ENCODE measurements at regions of chr5 and their contacts with region 1.

Region 1: DNA sequence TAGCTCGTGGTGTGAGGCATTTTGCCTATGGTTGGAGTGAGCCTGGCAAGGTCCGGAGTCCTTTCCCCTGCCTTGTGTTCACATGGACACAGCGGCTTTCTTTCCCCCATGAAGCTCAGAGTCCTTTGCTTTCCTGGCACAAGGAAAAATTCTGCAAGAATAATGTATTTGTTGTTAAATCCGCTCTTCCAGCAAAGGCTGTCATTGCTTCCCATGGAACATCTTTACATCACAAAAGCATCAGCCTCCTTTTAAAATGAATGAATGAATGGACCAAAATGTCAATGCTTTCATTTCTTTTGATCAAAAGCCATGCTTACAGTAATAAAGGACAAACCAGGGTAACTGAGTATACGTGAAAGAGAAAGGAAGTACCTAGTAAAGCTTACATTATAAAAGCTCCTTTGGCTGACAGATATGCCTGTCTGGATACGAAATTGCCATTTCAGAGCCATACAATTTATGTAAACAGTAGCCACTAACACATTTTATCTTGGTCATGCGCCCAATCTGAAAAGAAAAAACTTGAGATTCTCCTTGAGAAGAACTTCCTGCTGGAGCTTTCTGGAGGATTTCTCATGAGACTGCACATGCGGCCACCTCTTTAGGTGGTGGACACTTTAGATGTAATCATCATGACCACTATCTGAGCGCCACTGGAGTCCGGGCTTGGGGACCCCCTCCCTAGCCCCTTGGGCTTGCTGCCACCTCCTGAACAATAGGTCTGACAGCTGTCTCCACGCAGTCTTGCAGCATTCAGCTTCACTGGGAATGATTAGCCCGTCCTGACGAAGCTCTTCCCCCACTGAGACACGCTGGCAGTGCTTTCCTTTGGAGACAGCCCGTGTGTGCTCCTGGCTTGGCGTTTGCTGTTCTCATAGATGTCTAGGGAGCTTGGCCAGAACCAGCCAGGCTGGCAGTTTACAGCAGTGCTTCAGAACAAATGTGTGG is 355.9 kb downstream of the ADAMTS6 start:
- DNase-seq: no peak
- H3K4me3 ChIP-seq: no peak overlapping the region
- H3K27ac ChIP-seq: no peak overlapping the region
- H3K4me1 ChIP-seq: peaks cover 5% of the 10 kb centered on the region
- H3K27me3 ChIP-seq: no peaks in the 10 kb centered on the region
- CTCF ChIP-seq: no peak

Region 2: GRCh38 chr5:65142511-65143011 is 16.7 kb after region 1 on chr5:
- CTCF ChIA-PET with region 1: interaction called, 14 read pairs
- dilution Hi-C with region 1: no loop called
- in situ Hi-C with region 1: no loop called
- intact Hi-C with region 1: no loop called
- DNase-seq: no peak
- H3K4me3 ChIP-seq: no peak overlapping the region
- H3K27ac ChIP-seq: no peak overlapping the region
- H3K4me1 ChIP-seq: peaks cover 5% of the 10 kb centered on the region
- H3K27me3 ChIP-seq: no peaks in the 10 kb centered on the region
- CTCF ChIP-seq: no peak

Region 3: DNA sequence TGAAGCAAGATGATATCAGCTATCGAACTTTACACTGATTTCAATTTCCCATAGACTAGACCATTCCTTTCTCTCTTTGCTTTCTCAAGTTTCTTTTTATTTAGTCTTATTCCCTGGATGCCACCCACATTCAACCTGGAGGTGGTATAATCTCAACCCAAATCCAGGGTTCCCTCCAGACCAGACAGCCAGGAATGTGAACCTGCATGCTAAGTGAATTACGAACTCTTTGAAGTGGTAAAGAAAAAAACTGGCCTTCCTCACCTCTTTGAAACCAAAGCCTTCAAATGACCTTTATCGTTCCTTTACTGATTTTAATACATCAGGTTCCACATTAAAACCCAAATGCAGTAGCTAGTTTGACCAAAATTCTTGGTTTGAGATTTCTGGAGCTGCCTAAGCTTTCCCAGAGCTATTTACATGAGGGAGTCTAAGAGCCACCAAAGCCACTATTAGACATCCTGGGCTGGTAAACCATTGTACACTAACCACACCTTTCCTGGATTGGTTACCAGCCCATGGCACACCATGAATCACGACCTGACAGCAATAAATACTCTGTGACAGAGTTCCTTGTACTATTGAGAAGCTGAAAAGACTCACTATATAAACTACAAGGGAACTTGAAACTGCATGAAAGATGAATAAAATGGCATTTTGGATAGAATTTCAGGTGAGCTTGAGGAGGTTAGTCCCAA is 32.2 kb after region 1 on chr5:
- CTCF ChIA-PET with region 1: no interaction called
- dilution Hi-C with region 1: loop called (anchors 5 kb)
- in situ Hi-C with region 1: no loop called
- intact Hi-C with region 1: no loop called
- DNase-seq: peak; percentile 82
- H3K4me3 ChIP-seq: no peak overlapping the region
- H3K27ac ChIP-seq: peak overlapping the region; percentile 33
- H3K4me1 ChIP-seq: peaks cover 45% of the 10 kb centered on the region
- H3K27me3 ChIP-seq: no peaks in the 10 kb centered on the region
- CTCF ChIP-seq: no peak